GM23248 (cell line): ENCODE measurements at regions of chr3 and their contacts with region 1.

Region 1: DNA sequence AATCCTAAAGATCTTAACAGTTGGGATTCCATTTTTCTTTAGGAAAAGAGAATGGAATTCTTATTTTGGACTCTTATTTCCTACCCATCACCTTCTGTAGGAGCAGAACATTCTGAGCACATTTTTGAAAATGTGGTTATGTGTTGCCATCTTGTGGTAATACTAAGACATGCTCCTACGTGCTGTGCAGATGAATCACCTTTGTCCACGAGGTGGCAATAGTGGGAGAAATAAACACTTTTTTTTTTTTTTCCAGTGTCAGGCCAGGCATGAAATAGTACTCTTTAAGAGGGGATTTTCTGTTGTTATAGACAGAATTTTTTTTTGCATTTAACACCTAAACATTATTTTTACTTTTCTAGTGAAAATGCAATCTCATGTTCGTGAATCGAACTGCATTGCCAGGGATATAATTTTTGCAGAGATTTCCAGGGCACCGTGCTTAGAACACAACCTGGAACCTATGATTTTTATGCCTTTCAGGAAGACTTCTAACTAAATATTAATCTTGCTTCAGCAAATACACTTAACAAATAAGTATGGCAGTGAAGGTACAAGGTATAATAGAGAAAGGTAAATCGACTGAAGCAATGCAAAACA is 196.6 kb downstream of the GAP43 start:
- DNase-seq: peak; percentile 91
- H3K4me3 ChIP-seq: no peak overlapping the region
- H3K27ac ChIP-seq: no peak overlapping the region
- H3K4me1 ChIP-seq: peaks cover 1% of the 10 kb centered on the region; the same call in 1 of the 2 replicates
- H3K27me3 ChIP-seq: no peaks in the 10 kb centered on the region

Region 2: DNA sequence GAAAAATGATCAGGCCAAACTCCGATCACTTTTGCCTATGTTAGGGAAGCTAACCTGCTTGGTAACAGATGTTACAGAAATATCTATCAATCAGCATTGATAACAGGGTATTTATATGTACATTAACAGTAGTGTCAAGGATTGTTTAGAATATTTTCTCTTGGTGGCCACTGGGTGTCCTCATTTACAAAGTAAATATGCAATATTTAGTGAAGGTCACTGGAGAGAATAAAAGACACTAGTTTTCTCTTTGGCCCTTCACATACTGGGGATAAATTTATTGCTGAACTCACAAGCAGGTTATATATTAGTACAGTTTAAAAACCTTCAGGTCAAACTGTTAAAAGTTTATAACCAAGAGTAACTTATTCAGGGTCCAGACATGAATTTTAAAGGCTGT is 1457.1 kb before region 1 on chr3:
- in situ Hi-C with region 1: loop called (anchors 25 kb)
- DNase-seq: peak; percentile 68
- H3K4me3 ChIP-seq: peak overlapping the region; percentile 6; the same call in 1 of the 2 replicates
- H3K27ac ChIP-seq: peak overlapping the region; percentile 74
- H3K4me1 ChIP-seq: peaks cover 27% of the 10 kb centered on the region
- H3K27me3 ChIP-seq: no peaks in the 10 kb centered on the region

Region 3: GRCh38 chr3:114827495-114827894 is 992.4 kb before region 1 on chr3:
- in situ Hi-C with region 1: loop called (anchors 25 kb)
- DNase-seq: peak; percentile 63
- H3K4me3 ChIP-seq: no peak overlapping the region
- H3K27ac ChIP-seq: no peak overlapping the region
- H3K4me1 ChIP-seq: no peaks in the 10 kb centered on the region
- H3K27me3 ChIP-seq: no peaks in the 10 kb centered on the region

Region 4: GRCh38 chr3:115217678-115218451 is 602.0 kb before region 1 on chr3:
- in situ Hi-C with region 1: loop called (anchors 10 kb)
- DNase-seq: peak; percentile 91
- H3K4me3 ChIP-seq: peak overlapping the region; percentile 43
- H3K27ac ChIP-seq: peak overlapping the region; percentile 74
- H3K4me1 ChIP-seq: peaks cover 23% of the 10 kb centered on the region
- H3K27me3 ChIP-seq: no peaks in the 10 kb centered on the region

Region 5: GRCh38 chr3:115436767-115437301 is 383.1 kb before region 1 on chr3:
- in situ Hi-C with region 1: loop called (anchors 25 kb)
- DNase-seq: peak; percentile 97
- H3K4me3 ChIP-seq: no peak overlapping the region
- H3K27ac ChIP-seq: peak overlapping the region; percentile 86
- H3K4me1 ChIP-seq: peaks cover 17% of the 10 kb centered on the region
- H3K27me3 ChIP-seq: no peaks in the 10 kb centered on the region

Region 6: GRCh38 chr3:115692887-115693524 is 126.9 kb before region 1 on chr3:
- in situ Hi-C with region 1: loop called (anchors 10 kb)
- DNase-seq: peak; percentile 85
- H3K4me3 ChIP-seq: no peak overlapping the region
- H3K27ac ChIP-seq: peak overlapping the region; percentile 33
- H3K4me1 ChIP-seq: peaks cover 14% of the 10 kb centered on the region
- H3K27me3 ChIP-seq: no peaks in the 10 kb centered on the region

Region 7: DNA sequence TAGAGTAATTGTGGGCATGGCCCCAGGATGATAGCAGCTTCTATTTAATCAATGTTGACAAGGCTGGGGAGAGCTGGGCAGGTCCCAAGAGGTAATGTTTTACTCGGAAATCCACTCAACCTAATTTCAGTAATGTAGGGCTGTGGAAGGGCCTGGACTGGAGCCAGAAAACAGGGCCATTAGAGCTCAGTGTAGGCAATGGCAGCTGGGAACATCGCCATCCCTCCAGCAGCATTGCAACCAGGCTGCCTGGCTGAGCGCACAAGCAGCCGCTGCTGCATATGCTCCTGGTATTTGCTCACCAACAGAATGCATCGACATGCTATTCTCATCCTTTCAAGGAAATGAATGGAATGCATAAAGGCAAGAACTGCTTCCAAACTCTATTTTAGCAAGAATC is 106.6 kb before region 1 on chr3:
- in situ Hi-C with region 1: no loop called
- DNase-seq: peak; percentile 15
- H3K4me3 ChIP-seq: no peak overlapping the region
- H3K27ac ChIP-seq: no peak overlapping the region
- H3K4me1 ChIP-seq: peaks cover 30% of the 10 kb centered on the region
- H3K27me3 ChIP-seq: no peaks in the 10 kb centered on the region